AG04449 (cell line): ENCODE measurements at regions of chr10 and their contacts with region 1.

Region 1: DNA sequence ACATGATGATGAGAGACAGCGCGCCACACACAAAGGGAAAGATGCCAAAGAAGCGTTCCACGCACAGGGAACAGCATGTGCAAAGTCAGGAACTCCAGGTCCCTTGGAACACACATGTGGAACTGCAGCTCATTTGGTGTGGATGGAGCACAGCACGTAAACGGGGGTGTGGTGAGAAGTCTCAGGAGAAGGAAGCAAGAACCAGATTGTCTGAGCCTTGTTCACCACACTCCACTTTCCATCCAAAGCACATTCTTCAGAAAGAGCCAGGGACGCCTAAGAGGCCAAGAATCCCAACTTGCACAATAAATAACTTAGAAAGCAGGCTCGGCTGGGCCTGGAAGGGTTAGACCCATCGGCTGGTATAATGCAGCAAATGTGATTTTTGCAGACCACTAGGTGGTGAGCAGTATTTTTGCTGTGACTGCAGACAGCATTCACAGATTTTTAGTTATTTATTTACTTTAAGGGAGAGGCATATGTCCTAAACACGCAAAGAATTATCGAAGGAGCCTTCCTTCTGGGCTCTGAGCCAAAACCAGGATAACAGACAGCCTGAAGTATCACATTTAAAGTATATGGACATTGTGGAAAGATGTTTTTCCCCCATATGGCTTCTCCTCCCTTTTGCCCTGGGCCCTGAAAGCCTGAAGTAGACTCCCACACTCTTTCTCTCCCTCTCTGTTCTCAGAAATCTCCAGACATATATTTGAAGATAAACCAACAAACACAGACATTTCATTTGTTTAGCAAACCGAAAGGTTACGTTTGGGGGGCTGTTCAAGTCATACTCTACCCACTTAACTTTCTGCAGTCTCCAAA is 28.0 kb upstream of the ASCC1 start:
- DNase-seq: peak; percentile 84
- H3K4me3 ChIP-seq: no peak overlapping the region
- CTCF ChIP-seq: peak; percentile 48

Region 2: DNA sequence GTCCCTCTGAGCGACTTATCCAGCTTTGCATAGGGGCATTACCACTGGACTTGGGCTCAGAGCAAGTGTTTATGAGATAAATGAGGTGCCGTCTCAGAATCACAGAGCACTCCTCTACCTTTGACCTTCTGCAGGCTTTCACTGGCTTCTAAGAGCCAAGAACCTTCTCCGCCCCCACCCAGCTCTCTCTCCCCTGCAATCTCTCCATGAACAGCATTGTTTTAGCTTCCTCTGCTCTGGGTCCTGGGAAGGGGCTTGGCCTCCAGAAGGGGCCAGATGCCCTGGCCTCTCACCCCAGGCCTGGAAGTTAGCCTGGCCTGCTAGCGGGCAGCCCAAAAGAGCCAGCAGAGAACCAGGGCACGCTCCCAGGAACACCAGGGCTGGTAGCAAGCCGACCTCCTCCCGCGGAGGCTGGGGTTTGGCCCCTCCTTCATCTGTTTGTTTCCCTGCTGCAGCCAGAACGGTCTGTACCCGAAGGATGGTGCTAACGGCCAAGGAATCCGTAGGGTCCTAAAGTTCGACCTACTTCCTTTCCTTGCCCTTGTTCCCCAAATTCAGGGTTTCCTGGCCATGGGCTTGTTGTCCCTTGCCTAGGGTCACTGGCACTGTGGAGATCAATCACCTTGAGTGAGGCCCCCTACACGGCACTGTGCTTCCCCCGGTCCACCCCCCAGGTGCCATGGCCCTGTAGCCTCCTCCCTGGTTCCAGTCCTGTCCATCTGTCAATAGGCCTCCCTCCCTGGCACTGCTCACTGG is 11.0 kb after region 1 on chr10:
- CTCF ChIA-PET with region 1: interaction called, 12 read pairs
- POLR2A ChIA-PET with region 1: no interaction called
- DNase-seq: no peak
- H3K4me3 ChIP-seq: no peak overlapping the region
- CTCF ChIP-seq: no peak

Region 3: GRCh38 chr10:72260588-72261322 is 16.7 kb after region 1 on chr10:
- CTCF ChIA-PET with region 1: interaction called, 12 read pairs
- POLR2A ChIA-PET with region 1: no interaction called
- DNase-seq: no peak
- H3K4me3 ChIP-seq: peak overlapping the region; percentile 52
- CTCF ChIP-seq: peak; percentile 19

Region 4: DNA sequence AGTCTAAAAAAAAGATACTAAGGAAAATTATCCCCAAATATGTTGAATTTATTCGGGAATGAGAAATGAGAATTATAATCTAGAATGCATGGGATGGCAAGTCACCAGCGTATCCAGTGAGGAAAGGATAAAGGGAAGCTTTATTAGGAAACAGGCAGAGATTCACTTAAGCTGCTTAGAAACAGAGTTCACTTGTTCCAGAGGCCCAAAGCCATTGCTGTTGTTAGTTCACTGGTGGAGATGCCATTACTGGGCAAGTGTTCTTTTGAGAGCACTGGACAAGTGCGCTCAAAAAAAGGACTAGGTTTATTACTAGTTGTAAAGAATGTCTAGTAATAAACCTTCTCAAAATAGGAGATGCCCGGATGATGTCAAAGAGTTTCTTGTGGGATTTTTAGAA is 330.6 kb after region 1 on chr10:
- CTCF ChIA-PET with region 1: no interaction called
- POLR2A ChIA-PET with region 1: no interaction called
- DNase-seq: no peak
- H3K4me3 ChIP-seq: no peak overlapping the region
- CTCF ChIP-seq: no peak

Region 5: DNA sequence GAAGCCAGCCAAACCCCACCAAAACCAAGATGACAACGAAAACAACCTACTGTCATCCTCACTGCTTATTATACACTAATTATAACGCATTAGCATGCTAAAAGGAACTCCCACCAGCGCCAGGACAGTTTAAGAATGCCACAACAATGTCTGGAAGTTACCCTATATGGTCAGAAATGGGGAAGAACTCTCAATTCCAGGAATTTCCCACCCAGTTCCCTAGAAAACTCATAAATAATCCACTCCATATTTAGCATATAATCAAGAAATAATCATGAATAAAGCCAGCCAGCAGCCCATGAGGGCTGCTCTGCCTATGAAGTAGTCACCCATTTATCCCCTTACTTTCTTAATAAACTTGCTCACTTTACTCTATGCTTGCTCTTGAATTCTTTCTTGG is 361.1 kb after region 1 on chr10:
- CTCF ChIA-PET with region 1: no interaction called
- POLR2A ChIA-PET with region 1: no interaction called
- DNase-seq: no peak
- H3K4me3 ChIP-seq: no peak overlapping the region
- CTCF ChIP-seq: no peak